ENCODE measurements at regions of chr19 and their contacts with region 1.

Region 1: DNA sequence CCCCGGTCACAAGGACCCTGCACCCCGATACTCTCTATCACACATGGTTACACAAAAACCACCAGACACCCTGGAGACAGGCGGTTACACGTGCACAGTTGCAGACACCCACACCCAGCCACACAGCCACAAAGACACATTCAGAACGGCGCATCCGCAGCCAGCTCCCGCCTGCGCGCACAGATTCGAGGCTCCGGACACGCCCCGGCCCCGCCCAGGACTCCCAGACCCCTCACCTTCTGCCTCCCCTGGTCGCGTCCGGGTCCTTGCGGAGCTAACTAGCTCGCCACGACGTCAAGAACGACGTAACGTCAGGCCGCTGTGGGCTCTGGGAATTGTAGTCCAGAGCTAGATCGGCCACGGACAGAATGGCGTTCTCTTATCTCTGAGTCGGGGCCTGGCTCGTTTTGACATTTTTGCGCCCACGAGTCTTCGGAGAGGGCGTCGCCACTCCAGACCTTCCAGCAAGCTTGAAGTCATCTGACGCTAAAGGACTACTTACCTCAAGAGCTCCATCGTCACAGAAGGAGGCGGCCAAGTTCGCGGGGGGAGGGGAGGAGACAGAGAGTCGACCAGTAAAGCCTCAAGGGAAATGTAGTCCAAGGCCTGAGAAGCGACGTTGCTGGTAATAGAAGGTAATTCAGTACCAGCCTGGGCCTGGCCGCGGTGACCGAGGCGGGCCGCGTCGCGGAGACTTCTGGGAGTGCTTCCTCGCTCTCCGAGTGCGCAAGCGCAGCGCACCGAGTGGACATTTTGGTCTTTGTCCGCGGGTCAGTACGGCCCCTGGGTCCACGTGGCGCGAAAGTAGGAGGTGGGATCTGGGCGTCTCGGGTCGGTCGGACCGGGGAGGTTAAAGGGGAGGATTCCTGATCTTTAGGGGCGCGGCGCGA is at the starts of genes ZNF146 and ZNF565:
- DNase-seq: peak; percentile 94
- H3K4me3 Mint-ChIP-seq: no peak within 1 kb of the TSS
- H3K27ac Mint-ChIP-seq: no peak within 1 kb of the TSS
- H3K4me1 Mint-ChIP-seq: no peaks in the 10 kb centered on the region
- H3K27me3 Mint-ChIP-seq: no peaks in the 10 kb centered on the region
- total RNA-seq, gene ZNF146: 82.5 and 94.0 TPM in 2 replicates
- total RNA-seq, gene ZNF565: 2.1 and 2.4 TPM in 2 replicates

Region 2: DNA sequence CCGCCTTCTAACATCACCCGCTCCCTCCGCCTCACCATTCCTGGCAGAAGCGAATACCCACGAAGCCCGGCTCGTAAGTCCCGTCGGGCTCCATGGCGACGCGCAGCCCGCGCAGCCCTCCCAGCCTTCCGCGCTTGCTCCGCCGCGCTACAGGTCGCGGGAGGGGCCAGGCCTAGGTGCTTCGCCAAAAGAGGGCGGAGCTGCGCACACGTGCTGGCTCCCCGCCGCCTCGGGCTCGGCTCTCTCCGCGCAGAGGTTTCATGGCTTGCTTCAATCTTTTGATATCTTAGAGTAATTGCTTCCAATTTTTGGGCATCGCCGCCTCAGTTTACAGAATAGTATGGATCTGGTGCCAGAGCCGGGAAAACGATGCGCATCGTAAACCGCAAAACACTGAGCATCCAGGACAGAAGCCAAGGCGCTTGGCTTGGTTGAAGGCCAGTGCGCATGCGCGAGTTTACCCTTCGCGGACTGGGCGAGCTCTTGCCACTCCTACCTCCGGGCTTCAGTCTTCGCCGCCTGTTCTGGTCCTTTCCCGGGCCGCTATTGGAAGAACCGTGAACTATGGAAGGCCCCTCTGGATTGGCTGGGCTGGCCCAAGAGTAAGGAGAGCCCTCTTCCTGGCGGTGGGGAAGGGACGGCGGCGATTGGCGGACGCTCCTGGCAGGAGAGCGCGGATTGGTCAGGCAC is 99.7 kb before region 1 on chr19 and contains the start of gene POLR2I:
- intact Hi-C with region 1: loop called (anchors 1 kb)
- DNase-seq: peak; percentile 98
- H3K4me3 Mint-ChIP-seq: peak within 1 kb of the TSS; percentile 98
- H3K27ac Mint-ChIP-seq: peak within 1 kb of the TSS; percentile 92
- H3K4me1 Mint-ChIP-seq: peaks cover 38% of the 10 kb centered on the region
- H3K27me3 Mint-ChIP-seq: peaks cover 1% of the 10 kb centered on the region
- total RNA-seq, gene POLR2I: 76.3 and 92.4 TPM in 2 replicates

Region 3: DNA sequence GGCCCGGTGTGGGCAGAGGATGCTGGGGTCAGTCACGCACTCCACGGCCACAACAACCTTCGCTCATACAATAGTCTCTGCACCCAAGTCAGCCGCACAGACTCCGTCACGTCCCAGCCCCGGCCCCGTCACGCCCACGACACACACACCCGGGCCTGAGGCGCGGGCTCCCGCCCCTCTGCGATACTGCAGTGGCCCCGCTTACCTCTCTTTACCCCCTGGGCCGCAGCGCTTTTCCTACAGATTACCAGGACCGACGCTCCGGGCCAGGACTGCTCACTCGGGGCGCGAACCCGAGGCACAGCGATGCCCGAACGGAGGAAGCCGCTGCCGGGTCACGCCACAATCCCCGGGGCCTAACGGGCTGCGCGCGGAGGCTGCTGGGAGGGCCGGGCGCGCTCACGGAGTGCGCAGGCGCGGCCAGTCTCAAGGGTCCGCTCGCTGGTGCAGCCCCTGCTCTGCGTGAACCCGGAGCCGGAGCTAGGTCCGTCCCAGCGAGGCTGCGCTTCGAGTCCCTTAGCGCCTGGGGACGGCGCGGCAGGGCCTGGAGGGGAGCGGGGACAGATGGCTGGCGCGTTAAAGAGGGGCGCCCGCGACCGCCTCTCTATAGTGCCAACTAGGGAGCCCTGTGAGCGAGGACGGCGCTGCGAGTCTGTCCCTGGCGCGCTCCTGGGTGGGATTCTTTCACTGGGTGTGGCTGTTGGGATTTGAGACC is 203.8 kb after region 1 on chr19 and contains the start of gene ZFP82:
- intact Hi-C with region 1: loop called (anchors 1 kb)
- DNase-seq: peak; percentile 73
- H3K4me3 Mint-ChIP-seq: peak within 1 kb of the TSS; percentile 93
- H3K27ac Mint-ChIP-seq: peak within 1 kb of the TSS; percentile 94
- H3K4me1 Mint-ChIP-seq: peaks cover 18% of the 10 kb centered on the region
- H3K27me3 Mint-ChIP-seq: peaks cover 5% of the 10 kb centered on the region
- total RNA-seq, gene ZFP82: 5.1 and 5.3 TPM in 2 replicates

Region 4: DNA sequence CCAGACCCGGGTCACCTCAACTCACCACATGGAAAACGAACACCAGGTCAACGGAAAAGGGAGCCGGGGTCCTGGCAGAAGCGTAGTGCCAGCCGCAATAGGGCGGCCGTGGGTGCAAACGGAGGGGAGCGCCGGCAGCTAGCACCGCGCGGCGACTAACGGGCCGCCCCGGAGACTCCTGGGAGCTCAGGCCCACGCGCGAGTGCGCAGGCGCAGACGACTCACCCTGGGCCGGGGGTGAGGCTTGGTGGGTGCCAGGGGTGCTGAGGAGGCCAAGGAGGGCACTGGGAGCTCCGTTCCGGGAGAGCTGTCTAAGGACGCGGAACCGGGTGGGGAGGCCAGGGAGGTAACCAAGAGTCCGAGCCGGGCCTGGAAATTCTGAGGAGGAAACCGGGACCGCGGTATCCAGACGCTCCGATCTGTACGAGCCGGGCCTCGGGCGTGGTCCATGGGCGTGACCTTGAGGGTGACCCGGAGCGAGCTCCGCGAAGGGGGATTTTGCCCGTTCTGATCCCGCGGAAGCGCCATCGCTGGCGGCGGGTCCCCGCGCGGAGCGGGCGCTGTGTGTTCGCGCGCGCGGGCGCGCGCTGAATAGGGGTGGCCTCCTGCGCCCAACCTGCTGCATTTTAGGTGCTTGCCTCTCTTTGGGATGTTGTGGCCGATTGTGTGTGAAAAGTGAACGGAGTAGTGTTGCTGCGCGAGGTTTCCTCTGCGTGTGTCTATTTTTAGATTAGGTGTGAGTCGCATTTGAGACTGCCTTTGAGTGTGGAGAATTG is 390.7 kb after region 1 on chr19 and contains the start of gene ZNF382:
- intact Hi-C with region 1: loop called (anchors 1 kb)
- DNase-seq: peak; percentile 85
- H3K4me3 Mint-ChIP-seq: peak within 1 kb of the TSS; percentile 90
- H3K27ac Mint-ChIP-seq: peak within 1 kb of the TSS; percentile 95
- H3K4me1 Mint-ChIP-seq: peaks cover 26% of the 10 kb centered on the region
- H3K27me3 Mint-ChIP-seq: no peaks in the 10 kb centered on the region
- total RNA-seq, gene ZNF382: 10.2 and 10.8 TPM in 2 replicates

Region 5: GRCh38 chr19:36850559-36851442 is 636.2 kb after region 1 on chr19 and contains the start of gene ZNF345:
- intact Hi-C with region 1: loop called (anchors 1 kb)
- DNase-seq: peak; percentile 81
- H3K4me3 Mint-ChIP-seq: no peak within 1 kb of the TSS
- H3K27ac Mint-ChIP-seq: no peak within 1 kb of the TSS
- H3K4me1 Mint-ChIP-seq: peaks cover 6% of the 10 kb centered on the region
- H3K27me3 Mint-ChIP-seq: no peaks in the 10 kb centered on the region
- total RNA-seq, gene ZNF345: 3.7 and 4.4 TPM in 2 replicates

Region 6: GRCh38 chr19:37217855-37218591 is 1003.4 kb after region 1 on chr19 and contains the start of gene ZNF383:
- intact Hi-C with region 1: loop called (anchors 2 kb)
- DNase-seq: peak; percentile 78
- H3K4me3 Mint-ChIP-seq: peak within 1 kb of the TSS; percentile 96
- H3K27ac Mint-ChIP-seq: peak within 1 kb of the TSS; percentile 90
- H3K4me1 Mint-ChIP-seq: peaks cover 20% of the 10 kb centered on the region
- H3K27me3 Mint-ChIP-seq: no peaks in the 10 kb centered on the region
- total RNA-seq, gene ZNF383: 6.3 TPM in 2 replicates